Naive thymus-derived CD8-positive, alpha-beta T cell (primary cell): ENCODE measurements at regions of chr22 and their contacts with region 1.

Region 1: GRCh38 chr22:17217179-17217578 is 2.1 kb downstream of the ADA2 start:
- DNase-seq: peak in 4 of 10 donors; percentile 12 to 39 (median 30)
- ATAC-seq: peak; percentile 55
- H3K4me3 Mint-ChIP-seq: peak overlapping the region; percentile 83 to 98 (median 90)
- H3K27ac Mint-ChIP-seq: peak overlapping the region; percentile 86 to 98 (median 92)
- H3K4me1 Mint-ChIP-seq: peaks cover 35 to 84% (median 82%) of the 10 kb centered on the region in 4 donors
- H3K27me3 Mint-ChIP-seq: no peaks in the 10 kb centered on the region

Region 2: GRCh38 chr22:17228725-17229126 is 11.5 kb after region 1 on chr22:
- POLR2A ChIA-PET with region 1: interaction called, 10 read pairs
- DNase-seq: no peak
- ATAC-seq: no peak
- H3K4me3 Mint-ChIP-seq: no peak overlapping the region
- H3K27ac Mint-ChIP-seq: peak overlapping the region in 2 of 10 donors; percentile 28 to 56
- H3K4me1 Mint-ChIP-seq: peaks cover 0 to 11% (median 1%) of the 10 kb centered on the region in 4 donors
- H3K27me3 Mint-ChIP-seq: no peaks in the 10 kb centered on the region

Region 3: DNA sequence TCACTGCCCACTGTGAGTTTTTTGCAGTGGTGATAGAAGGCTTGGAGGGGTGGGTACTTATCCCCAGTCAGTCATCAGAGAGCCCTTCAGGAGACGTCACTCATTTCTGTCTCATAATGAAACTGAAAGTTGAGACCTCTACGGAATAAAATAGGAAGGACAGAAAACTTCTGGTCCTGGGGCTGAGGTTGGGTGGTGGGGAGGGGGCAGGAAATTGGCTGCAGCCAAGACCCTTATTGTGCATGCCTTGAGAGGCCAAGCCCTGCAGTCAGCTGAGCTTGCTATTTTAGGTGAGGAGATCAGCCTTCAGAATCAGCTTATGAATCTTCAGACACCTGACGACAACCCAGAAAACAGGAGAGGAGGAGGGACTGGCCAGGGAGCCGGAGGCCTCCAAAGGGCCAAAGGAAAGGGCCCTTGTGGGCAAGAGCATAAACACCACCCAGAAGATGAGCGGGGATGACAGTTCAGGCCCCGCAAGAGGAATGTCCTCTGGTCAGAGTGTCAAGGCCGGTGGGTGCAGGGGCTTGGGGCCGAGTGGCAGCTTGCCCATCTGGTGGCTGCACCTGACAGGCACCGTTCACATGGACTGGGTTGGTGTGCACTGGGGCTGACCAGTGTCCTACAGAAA is 20.0 kb after region 1 on chr22:
- POLR2A ChIA-PET with region 1: interaction called, 13 read pairs
- DNase-seq: peak in 3 of 10 donors; percentile 20 to 50 (median 44)
- ATAC-seq: peak; percentile 80 to 86
- H3K4me3 Mint-ChIP-seq: peak overlapping the region; percentile 80 to 95 (median 90)
- H3K27ac Mint-ChIP-seq: peak overlapping the region; percentile 90 to 98 (median 96)
- H3K4me1 Mint-ChIP-seq: peaks cover 8 to 20% (median 14%) of the 10 kb centered on the region in 4 donors
- H3K27me3 Mint-ChIP-seq: no peaks in the 10 kb centered on the region

Region 4: DNA sequence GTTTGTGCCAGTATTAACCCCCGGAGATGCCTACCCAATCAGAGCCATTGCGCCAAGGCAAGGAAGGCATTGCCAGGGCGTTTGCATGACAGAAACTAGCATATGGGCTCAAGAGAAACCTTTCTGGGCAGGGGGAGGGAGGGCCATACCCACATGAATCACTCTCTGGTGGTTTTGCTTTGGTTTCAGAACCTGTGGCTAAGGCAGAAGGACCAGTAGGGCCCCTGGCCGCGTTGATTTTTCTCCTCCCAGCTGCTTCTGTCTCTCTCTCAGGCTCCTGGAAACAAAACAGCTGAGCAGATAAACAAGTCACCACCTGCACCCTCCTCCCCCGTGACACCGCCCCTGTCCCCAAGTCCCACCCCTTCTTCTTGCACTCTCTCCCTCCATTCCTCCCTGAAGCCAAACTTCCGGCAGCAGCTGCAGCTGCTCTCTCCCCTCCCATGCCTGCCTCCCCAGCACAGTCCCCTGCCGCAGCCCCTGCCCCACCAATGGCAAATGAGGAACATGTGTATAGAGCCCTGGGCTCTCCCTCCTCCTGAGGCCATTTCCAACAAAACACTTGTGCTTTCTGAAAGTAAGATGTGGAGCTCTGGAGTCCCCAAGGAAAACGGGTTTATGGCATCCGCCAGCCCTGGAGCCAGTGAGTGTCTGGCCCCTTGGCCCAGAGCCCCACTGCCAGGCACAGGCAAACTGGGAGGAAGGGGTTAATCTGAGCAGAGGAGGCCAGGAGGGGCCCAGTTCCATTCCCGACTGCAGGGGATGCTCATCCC is 41.0 kb after region 1 on chr22:
- POLR2A ChIA-PET with region 1: interaction called, 27 read pairs
- DNase-seq: peak in 7 of 10 donors; percentile 9 to 74 (median 31)
- ATAC-seq: peak; percentile 84 to 93
- H3K4me3 Mint-ChIP-seq: peak overlapping the region; percentile 22 to 76 (median 56)
- H3K27ac Mint-ChIP-seq: peak overlapping the region; percentile 8 to 89 (median 76)
- H3K4me1 Mint-ChIP-seq: peaks cover 11 to 23% (median 22%) of the 10 kb centered on the region in 4 donors
- H3K27me3 Mint-ChIP-seq: no peaks in the 10 kb centered on the region